Endothelial cell of umbilical vein (primary cell): ENCODE measurements at regions of chr17 and their contacts with region 1.

Region 1: DNA sequence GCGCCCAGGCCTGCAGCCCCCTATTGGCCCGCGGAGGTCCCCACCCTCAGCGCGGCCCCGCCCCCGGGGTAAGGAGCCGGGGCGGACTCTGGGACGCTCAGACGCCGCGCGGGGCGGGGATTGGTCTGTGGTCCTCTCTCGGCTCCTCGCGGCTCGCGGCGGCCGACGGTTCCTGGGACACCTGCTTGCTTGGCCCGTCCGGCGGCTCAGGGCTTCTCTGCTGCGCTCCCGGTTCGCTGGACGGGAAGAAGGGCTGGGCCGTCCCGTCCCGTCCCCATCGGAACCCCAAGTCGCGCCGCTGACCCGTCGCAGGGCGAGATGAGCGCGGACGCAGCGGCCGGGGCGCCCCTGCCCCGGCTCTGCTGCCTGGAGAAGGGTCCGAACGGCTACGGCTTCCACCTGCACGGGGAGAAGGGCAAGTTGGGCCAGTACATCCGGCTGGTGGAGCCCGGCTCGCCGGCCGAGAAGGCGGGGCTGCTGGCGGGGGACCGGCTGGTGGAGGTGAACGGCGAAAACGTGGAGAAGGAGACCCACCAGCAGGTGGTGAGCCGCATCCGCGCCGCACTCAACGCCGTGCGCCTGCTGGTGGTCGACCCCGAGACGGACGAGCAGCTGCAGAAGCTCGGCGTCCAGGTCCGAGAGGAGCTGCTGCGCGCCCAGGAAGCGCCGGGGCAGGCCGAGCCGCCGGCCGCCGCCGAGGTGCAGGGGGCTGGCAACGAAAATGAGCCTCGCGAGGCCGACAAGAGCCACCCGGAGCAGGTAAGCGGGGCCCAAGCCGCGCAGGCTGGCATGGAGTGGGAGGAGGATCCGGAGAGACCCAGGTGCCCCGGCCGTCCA is at the start of gene NHERF1:
- DNase-seq: no peak
- H3K4me3 ChIP-seq: peak within 1 kb of the TSS; percentile 47 to 71 (median 57)
- H3K27ac ChIP-seq: no peak within 1 kb of the TSS
- H3K4me1 ChIP-seq: peaks cover 4% of the 10 kb centered on the region
- H3K27me3 ChIP-seq: no peaks in the 10 kb centered on the region
- CTCF ChIP-seq: peak; percentile 13 to 46
- POLR2A ChIP-seq: peak; percentile 92
- total RNA-seq, gene NHERF1: 26.8 and 26.9 TPM in 2 replicates

Region 2: DNA sequence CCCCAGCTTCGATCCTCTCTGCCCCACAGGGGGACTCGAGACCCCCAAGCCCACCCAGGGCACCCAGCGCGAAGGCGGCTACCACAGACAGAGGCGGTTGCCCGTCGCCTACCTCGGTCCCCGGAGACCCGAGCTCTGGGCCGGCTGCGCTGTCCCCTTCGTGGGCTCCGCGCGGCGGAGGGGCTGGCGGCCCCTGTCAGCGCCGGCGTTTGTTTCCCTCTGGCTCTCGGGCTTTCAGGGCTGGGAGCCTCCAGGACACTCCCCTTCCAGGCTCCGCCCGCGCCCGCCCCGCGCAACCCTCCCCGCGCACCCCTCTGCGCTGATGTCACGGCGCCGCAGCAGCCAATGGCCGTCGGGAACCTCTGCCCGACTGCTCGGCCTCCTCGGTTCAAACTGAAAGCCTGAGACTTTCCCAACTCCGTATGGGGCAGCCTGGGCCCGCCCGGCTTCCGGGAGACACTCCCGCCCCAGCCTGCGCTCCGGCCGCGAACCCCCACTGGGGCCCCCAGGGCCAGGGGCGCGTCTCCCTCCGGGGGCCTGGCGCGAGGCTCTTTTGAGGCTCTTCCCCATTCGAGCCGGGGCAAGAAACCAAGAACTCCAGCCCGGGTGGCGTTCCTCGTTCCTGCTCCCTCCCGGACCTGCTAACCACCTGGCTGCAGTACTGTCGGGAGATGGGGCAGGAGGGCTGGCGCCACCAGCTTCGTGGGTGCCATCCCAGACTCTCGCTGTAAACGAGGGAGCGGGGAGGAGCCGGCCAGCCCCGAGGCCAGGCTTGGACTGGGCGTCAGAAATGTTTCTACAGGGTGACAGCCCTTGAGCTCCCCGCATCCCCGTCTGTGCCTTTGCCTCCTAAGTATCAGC is 1436.7 kb before region 1 on chr17 and contains the start of gene CDC42EP4:
- CTCF ChIA-PET with region 1: no interaction called
- POLR2A ChIA-PET with region 1: no interaction called
- dilution Hi-C with region 1: no loop called
- intact Hi-C with region 1: loop called (anchors 10 kb)
- DNase-seq: peak; percentile 95
- H3K4me3 ChIP-seq: peak within 1 kb of the TSS; percentile 82 to 97 (median 88)
- H3K27ac ChIP-seq: peak within 1 kb of the TSS; percentile 80
- H3K4me1 ChIP-seq: peaks cover 27% of the 10 kb centered on the region
- H3K27me3 ChIP-seq: peaks cover 2% of the 10 kb centered on the region in 2 experiments
- CTCF ChIP-seq: no peak
- POLR2A ChIP-seq: peak; percentile 80
- total RNA-seq, gene CDC42EP4: 18.8 and 19.6 TPM in 2 replicates

Region 3: GRCh38 chr17:74759243-74759801 is 10.6 kb after region 1 on chr17:
- CTCF ChIA-PET with region 1: interaction called, 25 read pairs
- POLR2A ChIA-PET with region 1: no interaction called
- dilution Hi-C with region 1: no loop called
- intact Hi-C with region 1: loop called (anchors 1 kb)
- DNase-seq: no peak
- H3K4me3 ChIP-seq: no peak overlapping the region
- H3K27ac ChIP-seq: no peak overlapping the region
- H3K4me1 ChIP-seq: peaks cover 7% of the 10 kb centered on the region
- H3K27me3 ChIP-seq: no peaks in the 10 kb centered on the region
- CTCF ChIP-seq: no peak
- POLR2A ChIP-seq: no peak

Region 4: DNA sequence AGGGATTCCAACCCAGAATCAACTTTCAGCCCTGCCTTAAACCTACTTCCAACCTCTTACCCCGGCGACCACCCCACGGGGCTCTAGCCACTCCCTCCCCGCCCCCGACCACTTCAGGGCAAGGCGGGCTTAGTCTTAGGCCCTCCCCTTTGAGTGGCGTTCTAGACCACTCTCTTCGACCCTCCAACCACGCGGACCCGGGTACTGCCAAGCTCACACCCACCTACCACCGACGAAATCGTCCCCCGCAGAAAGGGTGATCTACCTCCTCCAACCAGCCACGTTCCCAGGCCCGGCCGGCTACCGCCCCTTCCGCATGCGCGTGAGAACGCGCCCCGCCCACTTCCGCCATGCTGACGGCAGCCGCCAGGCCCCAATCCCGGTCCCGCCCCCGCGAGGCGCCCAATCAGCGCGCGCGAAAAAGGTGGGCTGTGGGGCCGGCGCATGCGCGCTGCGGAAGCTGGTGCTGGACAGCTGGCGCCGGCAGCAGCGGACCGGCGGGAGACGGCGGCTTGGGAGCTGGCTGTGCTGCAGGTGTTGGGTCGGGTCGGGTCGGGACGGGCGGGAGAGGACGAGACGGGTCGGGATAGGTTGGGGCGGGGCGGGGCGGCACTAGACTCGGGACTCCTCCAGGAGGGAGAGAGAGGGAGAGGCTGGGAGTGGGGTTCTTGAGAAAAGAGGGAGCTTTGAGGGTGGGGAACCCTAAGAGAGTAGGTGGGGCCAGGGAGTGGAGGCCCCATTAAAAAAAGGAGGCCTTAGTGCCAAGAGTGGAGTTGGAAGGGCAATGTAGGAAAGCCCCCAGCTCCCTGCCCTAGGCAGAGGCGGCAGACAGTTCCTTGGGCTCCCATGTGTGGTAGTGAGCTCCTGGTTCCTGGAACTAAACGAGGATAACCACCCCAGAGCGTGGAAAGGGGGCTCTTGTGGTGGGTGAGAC is 27.6 kb after region 1 on chr17 and contains the start of gene NAT9:
- CTCF ChIA-PET with region 1: interaction called, 84 read pairs
- POLR2A ChIA-PET with region 1: interaction called, 5 read pairs
- dilution Hi-C with region 1: no loop called
- intact Hi-C with region 1: loop called (anchors 1 kb)
- DNase-seq: peak; percentile 98
- H3K4me3 ChIP-seq: peak within 1 kb of the TSS; percentile 49 to 85 (median 75)
- H3K27ac ChIP-seq: peak within 1 kb of the TSS; percentile 65
- H3K4me1 ChIP-seq: peaks cover 7% of the 10 kb centered on the region
- H3K27me3 ChIP-seq: no peaks in the 10 kb centered on the region
- CTCF ChIP-seq: no peak
- POLR2A ChIP-seq: peak; percentile 47
- total RNA-seq, gene NAT9: 44.8 and 45.8 TPM in 2 replicates

Region 5: DNA sequence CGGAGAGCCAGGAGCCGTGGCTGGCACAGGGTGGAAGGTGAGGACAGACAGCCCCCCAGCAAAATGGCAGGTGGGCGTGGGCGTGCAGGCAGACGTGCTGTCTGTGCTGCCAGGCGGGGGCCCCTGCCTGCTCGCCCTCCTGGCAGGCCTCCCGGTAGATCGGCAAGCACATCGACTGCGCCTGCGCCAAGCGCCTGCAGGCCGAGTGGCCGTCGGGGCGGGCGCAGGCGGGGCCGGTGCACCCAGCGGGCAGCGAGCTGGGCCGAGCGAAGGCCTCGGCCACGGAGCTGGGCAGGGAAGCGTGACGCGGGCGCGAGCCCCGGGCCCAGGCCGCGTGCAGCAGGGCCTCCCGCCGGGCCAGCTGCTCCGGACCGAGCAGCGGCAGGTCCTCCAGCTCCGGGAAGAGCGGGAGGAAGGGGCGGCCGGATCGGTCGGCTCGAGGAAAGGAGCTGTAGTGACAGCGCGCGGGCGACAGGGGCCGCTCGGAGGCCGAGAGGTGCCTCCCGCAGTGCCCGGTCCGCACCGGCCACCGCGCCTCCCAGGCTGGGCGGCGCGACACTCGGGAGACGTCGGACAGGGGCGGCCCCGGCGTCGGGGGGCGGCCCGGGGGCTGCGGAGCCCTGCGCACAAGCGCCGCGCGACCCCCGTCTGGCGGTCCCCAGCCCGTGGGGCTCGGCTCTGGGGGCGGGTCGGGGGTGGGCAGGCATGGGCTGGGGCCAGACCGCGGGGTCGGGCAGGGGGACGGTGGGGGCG is 94.0 kb after region 1 on chr17:
- CTCF ChIA-PET with region 1: interaction called, 11 read pairs
- POLR2A ChIA-PET with region 1: no interaction called
- dilution Hi-C with region 1: no loop called
- intact Hi-C with region 1: no loop called
- DNase-seq: peak; percentile 82
- H3K4me3 ChIP-seq: peak overlapping the region in 1 of 3 experiments; percentile 43
- H3K27ac ChIP-seq: no peak overlapping the region
- H3K4me1 ChIP-seq: no peaks in the 10 kb centered on the region
- H3K27me3 ChIP-seq: no peaks in the 10 kb centered on the region
- CTCF ChIP-seq: peak; percentile 50 to 64
- POLR2A ChIP-seq: no peak

Region 6: GRCh38 chr17:74873038-74873873 is 124.5 kb after region 1 on chr17:
- CTCF ChIA-PET with region 1: interaction called, 10 read pairs
- POLR2A ChIA-PET with region 1: no interaction called
- dilution Hi-C with region 1: no loop called
- intact Hi-C with region 1: loop called (anchors 1 kb)
- DNase-seq: peak; percentile 100
- H3K4me3 ChIP-seq: peak overlapping the region; percentile 67 to 83 (median 70)
- H3K27ac ChIP-seq: peak overlapping the region; percentile 75
- H3K4me1 ChIP-seq: peaks cover 25% of the 10 kb centered on the region
- H3K27me3 ChIP-seq: no peaks in the 10 kb centered on the region
- CTCF ChIP-seq: no peak
- POLR2A ChIP-seq: peak; percentile 88